ENCODE measurements at regions of chr3 and their contacts with region 1.

Region 1: GRCh38 chr3:134473868-134474546 is 11.8 kb downstream of the ANAPC13 start:
- DNase-seq: peak; percentile 55 to 85 (median 75)
- ATAC-seq: peak; percentile 85
- H3K4me3 ChIP-seq: no peak overlapping the region
- H3K4me3 Mint-ChIP-seq: no peak overlapping the region
- H3K27ac ChIP-seq: no peak overlapping the region
- H3K27ac Mint-ChIP-seq: no peak overlapping the region
- H3K4me1 ChIP-seq: peaks cover 4% of the 10 kb centered on the region
- H3K4me1 Mint-ChIP-seq: peaks cover 5% of the 10 kb centered on the region
- H3K27me3 ChIP-seq: no peaks in the 10 kb centered on the region
- H3K27me3 Mint-ChIP-seq: no peaks in the 10 kb centered on the region
- CTCF ChIP-seq: peak; percentile 83

Region 2: GRCh38 chr3:134357261-134358184 is 116.5 kb before region 1 on chr3:
- CTCF ChIA-PET with region 1: interaction called, 5 read pairs
- POLR2A ChIA-PET with region 1: no interaction called
- intact Hi-C with region 1: loop called in 1 of 2 experiments (anchors 5 kb)
- DNase-seq: no peak
- ATAC-seq: no peak
- H3K4me3 ChIP-seq: no peak overlapping the region
- H3K4me3 Mint-ChIP-seq: no peak overlapping the region
- H3K27ac ChIP-seq: no peak overlapping the region
- H3K27ac Mint-ChIP-seq: no peak overlapping the region
- H3K4me1 ChIP-seq: no peaks in the 10 kb centered on the region
- H3K4me1 Mint-ChIP-seq: no peaks in the 10 kb centered on the region
- H3K27me3 ChIP-seq: no peaks in the 10 kb centered on the region
- H3K27me3 Mint-ChIP-seq: peaks cover 3% of the 10 kb centered on the region
- CTCF ChIP-seq: no peak

Region 3: DNA sequence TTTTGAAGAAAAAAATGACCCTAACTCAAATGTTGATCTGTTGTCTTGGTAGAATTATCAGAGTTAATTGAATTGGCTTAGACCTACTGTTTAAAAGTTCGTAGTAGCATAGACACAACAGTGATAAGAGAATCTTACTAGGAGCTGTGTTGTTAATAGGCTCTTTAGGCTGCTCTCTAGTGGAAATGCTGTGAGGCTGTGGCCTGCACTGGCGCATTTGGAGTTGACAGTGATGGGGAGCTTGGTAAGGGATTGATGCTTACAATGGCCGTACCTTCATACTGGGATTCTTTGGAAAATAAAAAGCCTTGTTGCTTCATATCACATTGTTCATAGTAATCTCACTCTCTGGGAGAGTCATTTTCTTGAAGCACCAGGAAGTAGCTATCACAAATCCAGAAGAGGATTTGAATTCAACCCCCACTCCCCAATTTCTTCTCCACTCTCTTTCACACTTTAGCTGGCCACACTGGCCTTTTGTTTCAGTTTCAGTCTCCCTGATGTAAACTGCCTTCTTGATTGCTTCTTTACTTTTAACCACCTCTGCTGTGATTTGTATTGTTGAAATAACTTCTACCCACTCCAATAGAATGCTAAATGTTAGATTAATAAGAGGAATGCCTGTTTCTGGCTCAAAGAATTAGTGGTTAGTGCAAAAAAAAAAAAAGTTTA is 68.4 kb after region 1 on chr3:
- CTCF ChIA-PET with region 1: no interaction called
- POLR2A ChIA-PET with region 1: no interaction called
- intact Hi-C with region 1: no loop called
- DNase-seq: no peak
- ATAC-seq: no peak
- H3K4me3 ChIP-seq: no peak overlapping the region
- H3K4me3 Mint-ChIP-seq: no peak overlapping the region
- H3K27ac ChIP-seq: no peak overlapping the region
- H3K27ac Mint-ChIP-seq: no peak overlapping the region
- H3K4me1 ChIP-seq: no peaks in the 10 kb centered on the region
- H3K4me1 Mint-ChIP-seq: no peaks in the 10 kb centered on the region
- H3K27me3 ChIP-seq: no peaks in the 10 kb centered on the region
- H3K27me3 Mint-ChIP-seq: no peaks in the 10 kb centered on the region
- CTCF ChIP-seq: no peak

Measured in CD8-positive, alpha-beta T cell (primary cell).